ENCODE measurements at regions of chr12 and their contacts with region 1.

Region 1: DNA sequence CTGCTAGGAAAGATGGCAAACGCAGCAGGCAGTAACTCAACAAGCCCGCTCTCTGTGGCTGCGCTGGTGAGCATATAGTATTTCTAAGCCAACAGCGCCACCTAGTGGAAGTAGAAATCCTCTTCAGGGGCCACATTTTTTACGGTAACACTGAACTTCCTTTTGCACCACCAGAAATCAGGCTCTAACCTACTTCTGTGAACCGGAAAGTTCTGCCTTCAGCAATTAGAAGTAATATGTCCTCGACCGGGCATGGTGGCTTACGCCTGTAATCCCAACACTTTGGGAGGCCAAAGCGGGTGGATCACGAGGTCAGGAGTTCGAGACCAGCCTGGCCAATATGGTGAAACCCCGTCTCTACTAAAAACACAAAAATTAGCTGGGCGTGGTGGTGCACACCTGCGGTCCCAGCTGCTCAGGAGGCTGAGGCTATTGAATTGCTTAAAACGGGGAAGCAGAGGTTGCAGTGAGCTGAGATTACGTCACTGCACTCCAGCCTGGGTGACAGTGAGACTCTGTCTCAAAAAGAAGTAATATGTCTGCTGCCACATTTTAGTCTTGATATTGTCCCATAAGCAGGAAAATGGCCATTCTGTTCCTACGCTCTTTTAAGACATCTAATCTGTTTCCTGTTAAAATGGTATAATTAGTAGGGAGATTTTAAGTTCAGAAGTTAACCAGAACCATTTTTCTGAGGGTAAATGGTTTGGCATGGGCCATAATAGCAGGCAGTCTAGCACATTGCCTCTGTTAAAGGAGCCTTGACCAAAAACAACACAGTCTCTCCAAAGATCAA is 26.8 kb downstream of the APOBEC1 start:
- DNase-seq: peak; percentile 23 to 79
- ATAC-seq: peak; percentile 90 to 97 (median 96)
- H3K4me3 ChIP-seq: peak overlapping the region in 7 of 10 donors; percentile 35 to 53 (median 39)
- H3K27ac ChIP-seq: peak overlapping the region in 1 of 10 donors; percentile 69
- H3K4me1 ChIP-seq: peaks cover 0 to 17% (median 3%) of the 10 kb centered on the region in 9 donors
- H3K27me3 ChIP-seq: peaks cover 0 to 62% (median 18%) of the 10 kb centered on the region in 7 donors
- CTCF ChIP-seq: peak; percentile 80 to 93 (median 86)

Region 2: GRCh38 chr12:7142056-7142644 is 496.8 kb before region 1 on chr12:
- intact Hi-C with region 1: loop called in 1 of 10 experiments (anchors 10 kb)
- DNase-seq: no peak
- ATAC-seq: peak in 5 of 8 donors; percentile 27 to 58 (median 39)
- H3K4me3 ChIP-seq: no peak overlapping the region
- H3K27ac ChIP-seq: no peak overlapping the region
- H3K4me1 ChIP-seq: peaks cover 0 to 8% (median 0%) of the 10 kb centered on the region in 9 donors
- H3K27me3 ChIP-seq: no peaks in the 10 kb centered on the region
- CTCF ChIP-seq: peak; percentile 22 to 68 (median 57)

Region 3: GRCh38 chr12:7219599-7220243 is 419.2 kb before region 1 on chr12:
- intact Hi-C with region 1: loop called (anchors 1 to 5 kb)
- DNase-seq: peak; percentile 26 to 68
- ATAC-seq: peak in 4 of 8 donors; percentile 29 to 59 (median 40)
- H3K4me3 ChIP-seq: no peak overlapping the region
- H3K27ac ChIP-seq: no peak overlapping the region
- H3K4me1 ChIP-seq: no peaks in the 10 kb centered on the region
- H3K27me3 ChIP-seq: peaks cover 0 to 6% (median 0%) of the 10 kb centered on the region in 7 donors
- CTCF ChIP-seq: peak; percentile 73 to 92 (median 87)

Region 4: GRCh38 chr12:7583571-7583970 is 55.4 kb before region 1 on chr12:
- intact Hi-C with region 1: loop called in 1 of 10 experiments (anchors 10 kb)
- DNase-seq: no peak
- ATAC-seq: no peak
- H3K4me3 ChIP-seq: no peak overlapping the region
- H3K27ac ChIP-seq: no peak overlapping the region
- H3K4me1 ChIP-seq: peaks cover 0 to 4% (median 0%) of the 10 kb centered on the region in 9 donors
- H3K27me3 ChIP-seq: peaks cover 0 to 4% (median 0%) of the 10 kb centered on the region in 7 donors
- CTCF ChIP-seq: no peak

Measured in heart right ventricle (tissue), 16 donors.